Heart right ventricle (tissue), 16 donors: ENCODE measurements at regions of chr14 and their contacts with region 1.

Region 1: GRCh38 chr14:53539489-53540126 is 386.5 kb upstream of the DDHD1 start:
- DNase-seq: peak; percentile 68 to 80
- ATAC-seq: peak; percentile 65 to 90 (median 86)
- H3K4me3 ChIP-seq: no peak overlapping the region
- H3K27ac ChIP-seq: peak overlapping the region in 3 of 10 donors; percentile 11 to 30 (median 26)
- H3K4me1 ChIP-seq: peaks cover 0 to 37% (median 10%) of the 10 kb centered on the region in 9 donors
- H3K27me3 ChIP-seq: no peaks in the 10 kb centered on the region
- CTCF ChIP-seq: peak; percentile 77 to 97 (median 90)

Region 2: DNA sequence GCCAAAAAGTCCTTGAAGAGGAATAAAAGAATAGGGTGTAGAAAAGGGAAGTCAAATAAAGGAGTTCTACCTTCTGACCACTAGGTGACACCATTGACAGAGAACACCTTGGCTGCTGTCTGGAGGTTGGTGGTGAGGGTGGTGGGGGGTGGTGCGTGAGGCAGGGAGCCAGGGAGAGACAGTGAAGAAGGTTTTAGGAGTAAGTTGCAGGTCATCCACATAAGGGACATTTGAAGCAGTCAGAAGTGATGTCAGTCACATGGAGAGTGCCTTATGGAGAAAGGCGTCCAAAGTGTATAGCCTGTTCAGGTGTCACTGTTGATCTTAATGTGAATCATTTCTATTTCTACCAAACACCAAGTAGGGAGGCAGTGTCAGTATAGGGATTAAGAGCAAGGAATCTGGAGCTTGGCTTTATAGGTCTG is 107.2 kb before region 1 on chr14:
- intact Hi-C with region 1: loop called in 1 of 10 experiments (anchors 10 kb)
- DNase-seq: no peak
- ATAC-seq: peak in 4 of 8 donors; percentile 44 to 77 (median 54)
- H3K4me3 ChIP-seq: no peak overlapping the region
- H3K27ac ChIP-seq: no peak overlapping the region
- H3K4me1 ChIP-seq: no peaks in the 10 kb centered on the region
- H3K27me3 ChIP-seq: no peaks in the 10 kb centered on the region
- CTCF ChIP-seq: peak in 8 of 9 donors; percentile 33 to 62 (median 54)

Region 3: DNA sequence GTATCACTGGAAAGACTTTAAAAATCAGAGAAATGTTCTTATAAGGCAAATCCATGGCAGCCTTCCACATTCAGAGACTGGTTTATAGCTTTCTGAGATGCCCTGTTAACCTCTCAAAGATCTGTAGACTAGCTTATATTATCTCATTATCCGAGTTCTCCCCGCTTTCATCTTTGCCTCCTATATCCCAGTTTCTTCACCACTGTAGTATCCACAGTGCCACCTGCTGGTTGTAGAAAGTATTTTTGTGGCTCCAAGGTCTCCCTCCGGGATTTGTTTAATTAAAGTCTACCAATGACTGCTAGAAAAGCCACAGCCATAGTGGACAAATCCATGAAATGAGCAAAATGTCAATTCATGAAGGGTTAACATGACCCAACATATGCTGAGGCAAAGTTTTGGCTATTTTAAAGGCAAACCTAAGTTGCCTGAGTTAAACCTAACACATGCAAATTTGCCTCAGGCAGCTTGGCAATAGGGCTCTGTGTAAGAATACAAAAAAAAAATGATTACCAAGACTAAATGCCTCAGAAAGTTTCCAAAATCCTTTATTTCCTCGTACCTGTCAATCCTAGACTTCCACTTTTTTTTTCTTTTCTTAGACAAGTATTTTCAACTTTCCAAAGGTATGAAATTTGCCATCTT is 635.8 kb after region 1 on chr14:
- intact Hi-C with region 1: loop called (anchors 1 to 5 kb)
- DNase-seq: peak in 1 of 2 donors; percentile 78
- ATAC-seq: peak in 7 of 8 donors; percentile 46 to 79 (median 59)
- H3K4me3 ChIP-seq: no peak overlapping the region
- H3K27ac ChIP-seq: peak overlapping the region in 3 of 10 donors; percentile 54 to 82 (median 67)
- H3K4me1 ChIP-seq: peaks cover 5 to 52% (median 33%) of the 10 kb centered on the region in 9 donors
- H3K27me3 ChIP-seq: peaks cover 0 to 7% (median 0%) of the 10 kb centered on the region in 7 donors
- CTCF ChIP-seq: peak; percentile 59 to 89 (median 82)

Region 4: DNA sequence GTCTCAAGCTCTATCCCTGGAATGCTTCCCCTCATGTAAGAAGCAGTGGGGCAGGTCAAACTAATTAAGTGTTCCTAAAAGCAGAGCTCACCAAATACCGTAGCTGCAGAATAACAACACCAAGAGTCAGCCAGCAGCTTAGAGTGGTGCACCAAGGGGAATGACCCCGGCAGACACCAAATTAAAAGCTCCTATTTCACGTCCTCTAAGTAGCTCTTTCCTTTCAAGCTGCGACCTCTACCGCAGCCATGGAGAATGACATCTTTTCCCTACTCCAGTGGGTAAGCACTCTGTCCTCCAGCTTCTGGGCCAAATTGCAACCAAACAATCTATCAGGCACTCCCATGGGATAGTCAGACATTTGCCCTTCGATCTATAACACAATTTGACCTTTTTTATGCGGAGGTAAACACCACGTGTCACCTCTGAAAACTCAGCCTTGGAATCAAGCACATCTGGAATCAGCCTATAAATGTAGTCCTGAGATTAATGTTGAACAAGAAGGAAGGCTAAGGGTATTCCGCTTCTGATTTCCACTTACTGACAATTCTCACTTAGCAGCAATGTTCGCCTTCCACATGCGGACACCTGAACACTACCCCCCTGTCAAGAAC is 789.6 kb after region 1 on chr14:
- intact Hi-C with region 1: loop called in 3 of 10 experiments (anchors 5 kb)
- DNase-seq: peak in 1 of 2 donors; percentile 47
- ATAC-seq: peak; percentile 64 to 91 (median 82)
- H3K4me3 ChIP-seq: no peak overlapping the region
- H3K27ac ChIP-seq: peak overlapping the region in 2 of 10 donors; percentile 22 to 27
- H3K4me1 ChIP-seq: peaks cover 0 to 13% (median 5%) of the 10 kb centered on the region in 9 donors
- H3K27me3 ChIP-seq: no peaks in the 10 kb centered on the region
- CTCF ChIP-seq: peak in 8 of 9 donors; percentile 45 to 81 (median 75)

Region 5: GRCh38 chr14:54338696-54339317 is 799.2 kb after region 1 on chr14:
- intact Hi-C with region 1: loop called in 2 of 10 experiments (anchors 5 to 10 kb)
- DNase-seq: no peak
- ATAC-seq: peak in 1 of 8 donors; percentile 40
- H3K4me3 ChIP-seq: no peak overlapping the region
- H3K27ac ChIP-seq: no peak overlapping the region
- H3K4me1 ChIP-seq: peaks cover 0 to 12% (median 4%) of the 10 kb centered on the region in 9 donors
- H3K27me3 ChIP-seq: peaks cover 0 to 9% (median 0%) of the 10 kb centered on the region in 7 donors
- CTCF ChIP-seq: peak in 5 of 9 donors; percentile 26 to 45 (median 39)

Region 6: DNA sequence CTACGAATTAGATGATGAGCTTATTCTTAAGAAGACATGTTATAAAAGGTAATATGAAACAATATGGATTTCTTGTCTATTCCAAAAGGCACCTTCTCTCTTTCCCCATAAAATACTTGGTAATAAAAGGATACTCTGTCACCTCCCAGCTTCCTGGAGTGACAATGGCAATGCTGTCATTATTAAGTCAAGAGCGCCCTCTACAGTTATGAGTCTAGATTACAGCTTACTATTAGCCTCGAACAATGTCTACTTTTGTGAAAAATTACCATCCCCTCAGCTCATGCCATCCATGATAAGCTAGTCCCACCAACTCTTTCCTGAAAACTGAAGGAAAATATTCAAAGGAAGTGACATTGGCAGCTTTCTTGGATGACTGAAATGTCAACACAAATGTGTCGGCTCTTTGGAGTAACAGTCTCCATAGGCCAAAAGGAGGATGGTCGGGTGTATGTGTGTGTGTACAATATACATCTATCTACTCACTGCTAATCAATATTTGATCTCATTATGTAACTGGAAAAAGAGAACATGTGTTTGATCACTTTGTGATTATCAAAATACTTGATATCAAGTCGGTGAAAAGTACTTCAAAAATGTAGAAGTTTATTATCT is 808.5 kb after region 1 on chr14:
- intact Hi-C with region 1: loop called (anchors 5 to 10 kb)
- DNase-seq: peak in 1 of 2 donors; percentile 32
- ATAC-seq: peak in 6 of 8 donors; percentile 41 to 57 (median 50)
- H3K4me3 ChIP-seq: no peak overlapping the region
- H3K27ac ChIP-seq: peak overlapping the region in 4 of 10 donors; percentile 66 to 83 (median 80)
- H3K4me1 ChIP-seq: peaks cover 0 to 27% (median 21%) of the 10 kb centered on the region in 9 donors
- H3K27me3 ChIP-seq: no peaks in the 10 kb centered on the region
- CTCF ChIP-seq: peak; percentile 55 to 89 (median 75)